K562 (cell line): ENCODE measurements at regions of chr4 and their contacts with region 1.

Region 1: GRCh38 chr4:39697740-39698423 is at the start of gene UBE2K:
- DNase-seq: peak; percentile 93 to 95 (median 94)
- ATAC-seq: peak; percentile 95
- H3K4me3 ChIP-seq: peak within 1 kb of the TSS; percentile 82
- H3K27ac ChIP-seq: peak within 1 kb of the TSS; percentile 96
- H3K4me1 ChIP-seq: peaks cover 4 to 13% of the 10 kb centered on the region in 2 experiments; a peak in 3 of 5 replicates
- H3K27me3 ChIP-seq: no peaks in the 10 kb centered on the region
- CTCF ChIP-seq: peak in 1 of 3 experiments; percentile 8; a peak in 1 of 6 replicates
- EP300 ChIP-seq: no peak
- POLR2A ChIP-seq: peak; percentile 97
- RAD21 ChIP-seq: no peak
- polyA plus RNA-seq, gene UBE2K: 48.4 to 62.6 TPM

Region 2: DNA sequence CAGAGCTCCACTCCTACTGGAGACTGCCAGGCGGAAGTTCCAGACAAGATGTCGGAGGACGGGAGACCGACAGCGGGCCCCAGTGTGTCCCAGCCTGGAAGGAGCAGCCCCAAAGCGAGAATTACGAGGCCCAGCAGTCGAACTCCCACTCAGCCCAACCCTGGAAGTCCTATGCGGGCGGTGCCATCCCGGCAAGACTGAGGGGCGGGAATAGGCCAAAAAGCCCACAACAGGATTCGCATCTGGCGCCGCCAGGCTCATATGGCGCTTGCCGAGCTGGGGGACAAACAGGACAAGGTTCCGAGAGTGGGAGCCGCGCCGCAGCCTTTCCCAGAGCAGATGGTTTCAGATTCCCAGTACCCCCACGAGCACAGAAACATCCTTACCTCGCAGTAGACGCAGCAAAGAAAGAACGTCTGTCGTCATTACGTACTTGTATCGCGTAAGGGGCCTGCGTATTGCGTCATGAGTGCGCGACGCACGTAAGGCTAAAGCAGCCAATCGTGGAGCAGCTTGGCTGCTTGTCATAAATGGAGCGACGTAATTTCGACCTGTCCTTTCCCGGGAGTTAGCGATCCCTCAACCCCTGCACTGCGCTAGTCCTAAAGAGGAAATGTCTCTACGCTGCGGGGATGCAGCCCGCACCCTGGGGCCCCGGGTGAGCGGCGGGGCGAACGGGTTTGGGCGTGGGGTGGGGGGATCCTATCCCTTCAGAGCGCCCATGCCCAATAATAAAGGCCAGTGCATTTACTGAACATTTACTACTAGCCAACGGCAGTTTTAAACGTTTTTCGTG is 239.2 kb before region 1 on chr4 and contains the starts of genes LIAS and RPL9:
- CTCF ChIA-PET with region 1: no interaction called
- POLR2A ChIA-PET with region 1: interaction called, 10 read pairs
- in situ Hi-C with region 1: no loop called
- intact Hi-C with region 1: no loop called
- DNase-seq: peak; percentile 91 to 99 (median 95)
- ATAC-seq: peak; percentile 95
- H3K4me3 ChIP-seq: peak within 1 kb of the TSS; percentile 82
- H3K27ac ChIP-seq: peak within 1 kb of the TSS; percentile 93
- H3K4me1 ChIP-seq: peaks cover 3 to 12% of the 10 kb centered on the region in 2 experiments; a peak in 4 of 5 replicates
- H3K27me3 ChIP-seq: no peaks in the 10 kb centered on the region
- CTCF ChIP-seq: no peak; a peak in 1 of 6 replicates
- EP300 ChIP-seq: peak; percentile 56; the same call in 1 of the 2 replicates
- POLR2A ChIP-seq: peak; percentile 99
- RAD21 ChIP-seq: no peak
- polyA plus RNA-seq, gene LIAS: 40.3 to 56.6 TPM
- polyA plus RNA-seq, gene RPL9: 3,844 to 3,942 TPM

Region 3: DNA sequence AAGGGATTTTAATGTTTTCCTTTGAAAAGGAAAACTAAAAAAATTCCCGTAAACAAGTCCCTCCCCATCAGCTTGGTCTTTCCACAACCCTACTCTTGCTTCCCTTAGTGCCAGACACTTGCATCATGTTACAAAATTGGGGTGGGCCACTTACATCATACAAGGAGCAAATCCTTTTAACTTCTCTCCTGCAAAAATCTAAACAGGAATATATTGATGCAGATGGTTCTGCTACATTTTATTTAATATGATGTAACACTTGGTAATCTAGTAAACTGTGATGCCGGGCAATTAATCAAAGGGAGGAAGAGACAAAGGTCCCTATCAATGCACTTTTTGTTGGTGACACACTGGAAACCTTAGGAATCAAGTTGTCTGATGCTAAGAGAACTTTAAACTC is 125.3 kb after region 1 on chr4:
- CTCF ChIA-PET with region 1: no interaction called
- POLR2A ChIA-PET with region 1: no interaction called
- in situ Hi-C with region 1: no loop called
- intact Hi-C with region 1: loop called (anchors 5 kb)
- DNase-seq: no peak
- ATAC-seq: peak; percentile 40
- H3K4me3 ChIP-seq: no peak overlapping the region
- H3K27ac ChIP-seq: no peak overlapping the region
- H3K4me1 ChIP-seq: no peaks in the 10 kb centered on the region; a peak in 3 of 5 replicates
- H3K27me3 ChIP-seq: no peaks in the 10 kb centered on the region
- CTCF ChIP-seq: no peak
- EP300 ChIP-seq: no peak
- POLR2A ChIP-seq: no peak
- RAD21 ChIP-seq: no peak

Region 4: DNA sequence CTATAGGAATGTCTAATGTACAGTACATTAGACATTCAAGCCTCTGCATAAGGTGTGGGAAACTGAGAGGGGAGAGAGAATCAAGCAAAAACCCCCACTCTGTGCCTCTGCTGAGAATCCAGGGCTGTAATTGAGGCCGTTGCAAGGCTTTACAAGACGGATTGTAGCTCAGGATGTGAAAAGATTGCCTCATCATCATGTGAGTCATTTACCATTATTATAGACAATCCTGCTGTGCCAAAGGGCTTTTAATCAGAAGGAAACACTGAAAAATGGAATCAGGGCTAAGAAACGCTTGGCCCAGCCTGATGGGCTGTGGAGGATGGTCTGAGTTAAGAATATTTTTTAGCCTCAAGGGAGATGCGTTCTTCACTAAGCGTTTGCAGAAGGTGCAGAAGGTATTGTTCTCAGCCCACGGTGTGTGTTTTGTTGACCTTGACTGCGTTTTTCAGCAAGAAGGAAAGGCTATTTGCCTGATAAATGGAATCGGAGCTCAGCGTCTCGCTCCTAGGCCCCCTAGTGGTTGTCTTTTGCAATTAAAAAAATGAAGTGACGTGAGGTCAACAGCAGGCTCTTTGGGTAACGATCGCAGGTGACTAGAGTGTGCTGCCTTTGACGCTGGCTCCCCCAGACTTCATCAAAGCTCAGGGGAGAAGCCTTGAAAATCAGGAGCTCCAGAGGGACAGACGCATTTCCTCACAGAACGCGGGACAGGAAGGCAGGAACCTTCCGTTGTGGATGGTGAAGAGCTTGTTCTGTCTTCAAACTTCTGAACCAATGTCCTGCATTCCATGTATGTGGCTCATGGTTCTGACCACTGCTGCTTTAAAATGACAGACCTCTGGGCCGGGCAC is 619.1 kb after region 1 on chr4:
- CTCF ChIA-PET with region 1: no interaction called
- POLR2A ChIA-PET with region 1: no interaction called
- in situ Hi-C with region 1: no loop called
- intact Hi-C with region 1: loop called (anchors 10 kb)
- DNase-seq: peak; percentile 63 to 87 (median 68)
- ATAC-seq: peak; percentile 85
- H3K4me3 ChIP-seq: no peak overlapping the region
- H3K27ac ChIP-seq: peak overlapping the region; percentile 61
- H3K4me1 ChIP-seq: peaks cover 12 to 37% of the 10 kb centered on the region in 2 experiments
- H3K27me3 ChIP-seq: no peaks in the 10 kb centered on the region
- CTCF ChIP-seq: peak; percentile 74 to 90 (median 80)
- EP300 ChIP-seq: peak; percentile 22; the same call in 1 of the 2 replicates
- POLR2A ChIP-seq: no peak
- RAD21 ChIP-seq: peak; percentile 51 to 65